AG04449 (cell line): ENCODE measurements at regions of chr1 and their contacts with region 1.

Region 1: GRCh38 chr1:33641104-33641830 is 168.8 kb downstream of the ZSCAN20 start:
- DNase-seq: no peak
- H3K4me3 ChIP-seq: no peak overlapping the region
- CTCF ChIP-seq: peak; percentile 48

Region 2: DNA sequence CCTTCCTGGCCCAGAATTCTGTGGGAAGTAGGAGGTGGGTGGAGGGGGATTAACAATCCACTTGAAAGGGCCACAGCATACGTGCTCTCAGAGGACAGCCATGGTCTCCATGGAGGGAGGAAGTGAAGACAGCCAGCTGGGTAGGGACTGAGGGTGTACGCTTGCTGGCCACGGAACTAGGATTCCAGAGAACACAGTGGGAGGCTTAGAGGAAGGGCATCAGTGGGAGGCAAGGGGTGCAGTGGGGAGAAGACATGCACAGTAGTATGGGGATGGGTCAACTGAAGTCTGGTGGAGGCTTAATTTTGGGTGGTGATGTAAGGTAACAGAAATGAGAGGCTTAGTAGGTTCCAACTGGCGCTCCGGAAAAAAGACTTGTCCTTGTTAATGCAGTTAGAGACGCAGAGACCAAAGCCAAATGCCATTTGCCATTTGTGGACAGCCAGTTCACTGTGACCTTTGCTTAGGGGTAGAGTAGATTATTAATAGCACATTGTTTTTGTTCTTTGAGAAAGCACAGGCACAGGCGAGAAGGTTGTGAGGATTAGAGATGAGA is 65.9 kb before region 1 on chr1:
- CTCF ChIA-PET with region 1: no interaction called
- POLR2A ChIA-PET with region 1: no interaction called
- DNase-seq: no peak
- H3K4me3 ChIP-seq: no peak overlapping the region
- CTCF ChIP-seq: no peak

Region 3: DNA sequence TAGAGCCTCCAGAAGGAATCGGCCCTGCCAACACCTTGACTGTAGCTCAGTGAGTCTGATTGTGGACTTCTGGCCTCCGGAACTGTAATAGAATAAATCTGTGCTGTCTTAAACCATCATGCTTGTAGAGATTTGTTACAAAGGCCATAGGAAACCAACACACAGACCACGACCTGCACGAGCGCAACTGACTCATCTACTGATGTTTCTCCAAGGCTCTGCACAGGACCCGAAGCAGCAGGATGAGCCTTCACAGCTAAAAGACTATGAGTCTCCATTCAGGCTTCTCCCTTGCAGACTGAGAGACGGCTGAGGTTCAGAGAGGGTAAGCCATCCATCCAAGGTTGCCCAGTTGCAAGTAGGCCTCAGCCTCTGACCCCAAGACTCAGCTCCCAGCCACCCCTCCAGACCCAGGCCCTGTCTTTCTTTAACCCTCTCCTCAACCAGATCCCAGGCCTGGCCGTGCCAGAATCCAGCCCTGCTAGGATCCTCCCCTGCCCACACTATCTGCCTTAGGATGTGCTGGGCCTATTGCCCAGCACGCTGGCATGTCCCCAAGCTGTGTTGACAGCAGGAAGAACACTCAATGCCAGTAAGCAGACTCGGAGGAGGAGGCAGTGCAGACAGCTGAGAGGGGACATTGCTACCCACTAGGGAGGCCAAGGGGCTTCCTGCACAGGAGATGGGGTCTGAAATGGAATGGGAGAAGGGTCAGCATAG is 331.6 kb after region 1 on chr1:
- CTCF ChIA-PET with region 1: no interaction called
- POLR2A ChIA-PET with region 1: no interaction called
- DNase-seq: no peak
- H3K4me3 ChIP-seq: no peak overlapping the region
- CTCF ChIP-seq: no peak

Region 4: GRCh38 chr1:34597877-34598514 is 956.7 kb after region 1 on chr1:
- CTCF ChIA-PET with region 1: interaction called, 30 read pairs
- POLR2A ChIA-PET with region 1: no interaction called
- DNase-seq: peak; percentile 12
- H3K4me3 ChIP-seq: no peak overlapping the region
- CTCF ChIP-seq: peak; percentile 91